Activated naive CD4-positive, alpha-beta T cell treated with anti-CD3 and anti-CD28 coated beads for 36 hours (primary cell): ENCODE measurements at regions of chr6 and their contacts with region 1.

Region 1: DNA sequence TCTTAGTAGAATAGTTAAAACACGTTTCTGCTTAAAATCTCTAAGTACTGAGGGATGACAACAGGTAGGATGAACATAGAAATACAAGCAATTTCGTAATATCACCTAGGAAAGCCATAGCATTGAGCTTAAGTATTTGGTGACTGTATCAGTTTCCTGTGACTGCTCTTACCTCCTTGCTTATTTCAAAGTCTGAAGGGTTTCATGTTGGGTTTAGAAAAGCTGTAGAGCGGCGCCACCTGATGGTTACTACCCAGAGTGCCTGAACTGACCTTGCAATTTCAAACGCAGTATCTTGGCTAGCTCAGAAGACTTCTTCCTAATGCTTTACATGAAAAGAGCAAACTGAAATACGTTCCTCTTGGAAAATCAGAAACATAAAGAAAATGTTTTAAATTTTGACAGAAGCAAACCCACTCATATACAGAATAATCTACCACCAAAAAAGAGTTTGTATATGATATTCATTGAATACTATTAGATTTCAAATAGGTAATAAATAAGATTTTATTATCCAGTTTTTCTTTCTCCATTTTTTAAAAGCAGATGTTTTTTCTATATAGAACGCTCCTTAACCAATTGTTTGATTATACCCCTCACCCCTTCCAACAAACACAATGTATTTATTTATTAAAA is 82.3 kb upstream of the RIPOR2 start:
- DNase-seq: peak; percentile 93
- H3K4me3 Mint-ChIP-seq: peak overlapping the region; percentile 6
- H3K27ac Mint-ChIP-seq: peak overlapping the region; percentile 84
- H3K4me1 Mint-ChIP-seq: peaks cover 55% of the 10 kb centered on the region
- H3K27me3 Mint-ChIP-seq: no peaks in the 10 kb centered on the region

Region 2: DNA sequence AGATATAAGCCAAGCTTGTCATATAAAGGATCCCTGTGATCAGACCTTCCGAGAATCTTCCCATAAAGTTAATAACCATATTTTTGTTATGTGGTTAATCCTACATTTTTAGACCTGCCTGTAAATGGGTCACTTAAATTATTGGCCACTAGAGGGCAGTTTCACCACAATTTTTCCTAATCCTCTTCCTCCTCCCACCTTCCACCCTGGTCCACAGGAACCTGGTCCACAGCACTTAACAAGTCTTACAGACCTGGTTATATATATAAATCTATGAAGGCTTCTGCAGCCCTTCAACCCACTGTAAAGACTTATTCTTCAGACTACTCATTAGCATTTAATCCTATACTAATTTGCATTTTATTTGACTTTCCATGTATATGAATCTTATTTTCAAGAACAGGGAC is 587.0 kb before region 1 on chr6:
- CTCF ChIA-PET with region 1: no interaction called
- intact Hi-C with region 1: loop called (anchors 2 kb)
- DNase-seq: peak; percentile 36
- H3K4me3 Mint-ChIP-seq: no peak overlapping the region
- H3K27ac Mint-ChIP-seq: no peak overlapping the region
- H3K4me1 Mint-ChIP-seq: no peaks in the 10 kb centered on the region
- H3K27me3 Mint-ChIP-seq: no peaks in the 10 kb centered on the region

Region 3: GRCh38 chr6:24666641-24667377 is 351.2 kb before region 1 on chr6 and contains the starts of genes ACOT13 and TDP2:
- CTCF ChIA-PET with region 1: no interaction called
- intact Hi-C with region 1: no loop called
- DNase-seq: peak; percentile 97
- H3K4me3 Mint-ChIP-seq: peak within 1 kb of the TSS; percentile 90
- H3K27ac Mint-ChIP-seq: peak within 1 kb of the TSS; percentile 95
- H3K4me1 Mint-ChIP-seq: peaks cover 35% of the 10 kb centered on the region
- H3K27me3 Mint-ChIP-seq: no peaks in the 10 kb centered on the region
- total RNA-seq, gene ACOT13: 34.0 to 36.1 TPM
- total RNA-seq, gene TDP2: 41.5 to 44.2 TPM

Region 4: GRCh38 chr6:24689964-24690363 is 328.1 kb before region 1 on chr6:
- CTCF ChIA-PET with region 1: no interaction called
- intact Hi-C with region 1: loop called (anchors 2 kb)
- DNase-seq: no peak
- H3K4me3 Mint-ChIP-seq: no peak overlapping the region
- H3K27ac Mint-ChIP-seq: no peak overlapping the region
- H3K4me1 Mint-ChIP-seq: peaks cover 22% of the 10 kb centered on the region
- H3K27me3 Mint-ChIP-seq: no peaks in the 10 kb centered on the region

Region 5: GRCh38 chr6:24720604-24721460 is 297.2 kb before region 1 on chr6:
- CTCF ChIA-PET with region 1: no interaction called
- intact Hi-C with region 1: loop called (anchors 1 kb)
- DNase-seq: peak; percentile 100
- H3K4me3 Mint-ChIP-seq: peak overlapping the region; percentile 99
- H3K27ac Mint-ChIP-seq: peak overlapping the region; percentile 95
- H3K4me1 Mint-ChIP-seq: peaks cover 29% of the 10 kb centered on the region
- H3K27me3 Mint-ChIP-seq: no peaks in the 10 kb centered on the region

Region 6: GRCh38 chr6:24883618-24884017 is 134.4 kb before region 1 on chr6:
- CTCF ChIA-PET with region 1: interaction called, 3 read pairs
- intact Hi-C with region 1: loop called (anchors 2 kb)
- DNase-seq: peak; percentile 82
- H3K4me3 Mint-ChIP-seq: peak overlapping the region; percentile 73
- H3K27ac Mint-ChIP-seq: peak overlapping the region; percentile 99
- H3K4me1 Mint-ChIP-seq: peaks cover 91% of the 10 kb centered on the region
- H3K27me3 Mint-ChIP-seq: no peaks in the 10 kb centered on the region

Region 7: DNA sequence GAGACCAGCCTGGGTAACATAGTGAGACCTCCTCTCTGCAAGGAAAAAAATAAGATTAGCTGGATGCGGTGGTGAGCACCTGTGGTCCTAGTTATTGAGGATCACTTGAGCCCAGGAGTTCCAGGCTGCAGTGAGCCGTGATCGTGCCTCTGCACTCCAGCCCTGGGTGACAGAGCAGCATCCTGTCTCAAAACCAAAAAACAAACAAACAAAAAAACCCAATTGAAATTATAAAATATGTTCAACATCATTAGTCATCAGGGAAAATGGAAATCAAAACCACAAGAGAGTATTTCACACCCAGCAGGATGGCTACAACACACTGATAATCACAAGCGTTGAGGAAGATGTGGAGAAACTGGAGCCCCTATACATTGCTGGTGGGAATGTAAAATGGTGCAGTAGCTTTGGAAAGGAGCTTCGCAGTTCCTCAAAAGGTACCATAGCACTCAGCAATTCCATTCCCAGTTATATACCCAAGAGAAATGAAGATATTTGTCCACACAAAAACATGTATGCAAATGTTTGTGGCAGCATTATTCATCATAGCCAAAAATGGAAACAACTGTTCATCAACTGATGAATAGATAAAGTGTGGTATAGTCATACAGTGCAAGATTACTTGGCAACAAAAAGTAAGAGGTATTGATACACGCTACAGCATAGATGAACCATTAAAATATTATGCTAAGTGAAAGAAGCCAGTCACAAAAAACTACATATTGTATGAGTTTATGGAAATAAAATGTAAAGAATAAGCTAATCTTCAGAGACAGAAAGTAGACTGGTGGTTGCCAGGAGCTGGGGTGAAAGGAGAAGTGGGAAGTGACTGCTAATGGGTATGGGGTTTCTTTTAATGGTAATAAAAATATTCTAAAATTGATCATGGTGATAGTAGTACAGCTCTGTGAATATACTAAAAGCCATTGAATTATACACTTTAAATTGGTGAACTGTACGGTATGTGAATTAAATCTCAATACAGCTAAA is 43.6 kb before region 1 on chr6:
- CTCF ChIA-PET with region 1: interaction called, 14 read pairs
- intact Hi-C with region 1: no loop called
- DNase-seq: peak; percentile 59
- H3K4me3 Mint-ChIP-seq: peak overlapping the region; percentile 16
- H3K27ac Mint-ChIP-seq: peak overlapping the region; percentile 92
- H3K4me1 Mint-ChIP-seq: peaks cover 58% of the 10 kb centered on the region
- H3K27me3 Mint-ChIP-seq: no peaks in the 10 kb centered on the region

Region 8: GRCh38 chr6:25070547-25071366 is 52.7 kb after region 1 on chr6:
- CTCF ChIA-PET with region 1: interaction called, 16 read pairs
- intact Hi-C with region 1: loop called (anchors 2 kb)
- DNase-seq: peak; percentile 91
- H3K4me3 Mint-ChIP-seq: peak overlapping the region; percentile 38
- H3K27ac Mint-ChIP-seq: peak overlapping the region; percentile 70
- H3K4me1 Mint-ChIP-seq: peaks cover 10% of the 10 kb centered on the region
- H3K27me3 Mint-ChIP-seq: no peaks in the 10 kb centered on the region